ENCODE measurements at regions of chr17 and their contacts with region 1.

Region 1: DNA sequence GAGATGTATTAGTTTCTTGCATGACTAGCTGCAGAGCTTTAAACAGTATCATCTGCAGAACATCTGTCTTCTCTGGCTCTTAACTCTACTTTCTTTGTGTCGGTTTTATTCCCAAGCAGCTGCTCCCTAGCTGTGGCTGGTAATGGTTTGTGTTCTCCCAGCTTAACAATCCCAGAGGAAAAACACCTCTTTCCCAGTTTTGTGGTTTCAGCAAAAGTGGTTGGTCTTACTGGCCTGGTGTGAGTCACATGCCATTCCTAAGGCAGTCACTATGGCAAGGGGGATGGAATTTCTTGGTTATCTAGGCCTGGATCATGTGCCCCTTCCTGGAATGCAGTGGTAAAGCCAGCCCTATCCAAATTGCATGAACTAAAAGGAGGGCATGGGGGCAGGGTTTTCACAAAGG is 27.5 kb downstream of the OMG start:
- DNase-seq: peak; percentile 88
- H3K4me3 ChIP-seq: no peak overlapping the region
- H3K27ac ChIP-seq: peak overlapping the region; percentile 61
- H3K4me1 ChIP-seq: peaks cover 21% of the 10 kb centered on the region
- H3K27me3 ChIP-seq: no peaks in the 10 kb centered on the region
- CTCF ChIP-seq: no peak
- POLR2A ChIP-seq: no peak

Region 2: DNA sequence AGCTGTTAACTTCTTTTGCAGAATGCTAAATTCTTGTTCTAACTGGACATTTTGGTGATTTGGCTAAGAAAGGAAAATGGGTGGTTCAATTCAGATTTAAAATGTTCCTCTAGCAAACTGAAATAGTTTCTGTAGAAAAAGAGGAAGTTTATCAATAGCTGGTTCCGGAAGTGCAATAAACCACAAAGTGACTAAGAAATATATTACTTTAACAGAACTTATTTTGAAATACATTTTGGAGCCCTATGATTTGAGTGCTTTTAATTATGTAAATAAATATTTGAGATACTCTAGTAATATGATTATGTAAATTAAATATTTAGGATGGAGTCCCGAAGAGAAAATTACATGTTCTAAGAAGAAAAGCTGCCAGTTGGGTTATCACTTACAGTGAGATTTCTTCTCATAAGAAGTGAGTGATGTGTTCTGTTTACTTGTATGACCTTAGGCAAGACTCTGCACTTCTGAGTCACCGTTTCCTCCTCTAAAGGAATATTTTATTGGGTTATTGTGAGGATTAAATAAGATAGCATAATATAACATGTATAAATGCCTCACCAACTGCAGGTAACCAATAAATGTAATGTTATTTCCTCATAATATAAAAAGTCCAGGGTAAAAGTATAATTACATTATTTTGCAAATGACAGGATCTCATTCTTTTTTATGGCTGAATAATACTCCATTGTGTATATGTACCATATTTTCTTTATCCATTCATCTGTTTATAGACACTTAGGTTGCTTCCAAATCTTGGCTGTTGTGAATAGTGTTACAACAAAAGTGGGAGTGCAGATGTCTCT is 44.6 kb after region 1 on chr17 and contains the start of gene EVI2B:
- CTCF ChIA-PET with region 1: interaction called, 7 read pairs
- POLR2A ChIA-PET with region 1: no interaction called
- dilution Hi-C with region 1: no loop called
- intact Hi-C with region 1: loop called (anchors 5 kb)
- DNase-seq: peak; percentile 78
- H3K4me3 ChIP-seq: peak within 1 kb of the TSS in 1 of 3 experiments; percentile 54
- H3K27ac ChIP-seq: peak within 1 kb of the TSS; percentile 47
- H3K4me1 ChIP-seq: peaks cover 21% of the 10 kb centered on the region
- H3K27me3 ChIP-seq: no peaks in the 10 kb centered on the region
- CTCF ChIP-seq: no peak
- POLR2A ChIP-seq: no peak
- total RNA-seq, gene EVI2B: 1.7 and 2.3 TPM in 2 replicates

Region 3: GRCh38 chr17:31967648-31968047 is 698.1 kb after region 1 on chr17:
- CTCF ChIA-PET with region 1: no interaction called
- POLR2A ChIA-PET with region 1: no interaction called
- dilution Hi-C with region 1: no loop called
- intact Hi-C with region 1: no loop called
- DNase-seq: no peak
- H3K4me3 ChIP-seq: no peak overlapping the region
- H3K27ac ChIP-seq: no peak overlapping the region
- H3K4me1 ChIP-seq: no peaks in the 10 kb centered on the region
- H3K27me3 ChIP-seq: no peaks in the 10 kb centered on the region
- CTCF ChIP-seq: no peak
- POLR2A ChIP-seq: no peak

Measured in endothelial cell of umbilical vein (primary cell).